ENCODE measurements at regions of chr1 and their contacts with region 1.

Region 1: GRCh38 chr1:67853704-67854103 is 20.4 kb upstream of the GNG12 start:
- DNase-seq: peak; percentile 83
- H3K4me3 Mint-ChIP-seq: no peak overlapping the region
- H3K27ac Mint-ChIP-seq: no peak overlapping the region
- H3K4me1 Mint-ChIP-seq: peaks cover 20% of the 10 kb centered on the region
- H3K27me3 Mint-ChIP-seq: no peaks in the 10 kb centered on the region
- CTCF ChIP-seq: peak; percentile 87

Region 2: DNA sequence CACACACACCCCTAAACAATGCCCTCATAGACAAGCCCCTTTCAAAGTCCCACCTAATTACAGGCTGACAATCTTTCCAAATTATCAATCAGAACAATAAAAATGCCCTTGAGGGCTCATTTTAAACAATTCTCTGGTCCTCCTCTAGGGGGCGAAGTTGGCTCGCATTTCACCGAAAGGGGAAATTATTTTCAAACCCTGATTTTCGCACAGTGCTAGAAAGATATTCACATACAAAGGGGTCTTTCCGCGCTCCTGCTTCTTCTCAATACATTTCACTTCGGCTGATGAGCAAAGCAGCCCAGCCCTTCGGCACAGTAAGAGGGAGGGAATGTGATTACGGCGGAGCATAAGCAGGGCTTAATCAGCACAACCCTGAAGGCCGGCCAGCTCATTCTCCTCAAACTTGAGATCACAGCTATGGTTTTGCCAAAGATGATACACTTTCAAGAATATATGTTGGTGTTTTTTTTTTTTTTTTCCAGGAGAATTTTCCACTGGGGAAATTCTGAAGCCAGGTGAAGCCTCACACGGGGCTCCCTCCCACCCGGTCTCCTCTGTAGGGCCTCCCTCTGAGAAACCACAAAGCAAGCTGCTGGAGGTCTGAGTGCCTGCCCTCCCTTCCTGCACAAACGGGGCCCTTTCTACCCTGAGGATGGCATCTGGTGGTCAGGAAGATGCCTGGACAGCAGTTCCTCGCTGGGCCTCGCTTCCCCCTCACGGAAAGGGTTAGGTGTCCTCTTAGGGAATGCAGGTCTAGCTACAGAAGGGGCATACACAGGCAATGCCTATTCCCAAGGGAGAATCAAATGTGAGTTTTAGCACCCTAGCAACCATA is 87.3 kb before region 1 on chr1:
- CTCF ChIA-PET with region 1: interaction called, 19 read pairs
- intact Hi-C with region 1: loop called (anchors 1 kb)
- DNase-seq: peak; percentile 60
- H3K4me3 Mint-ChIP-seq: no peak overlapping the region
- H3K27ac Mint-ChIP-seq: no peak overlapping the region
- H3K4me1 Mint-ChIP-seq: peaks cover 32% of the 10 kb centered on the region
- H3K27me3 Mint-ChIP-seq: no peaks in the 10 kb centered on the region
- CTCF ChIP-seq: peak; percentile 60

Region 3: DNA sequence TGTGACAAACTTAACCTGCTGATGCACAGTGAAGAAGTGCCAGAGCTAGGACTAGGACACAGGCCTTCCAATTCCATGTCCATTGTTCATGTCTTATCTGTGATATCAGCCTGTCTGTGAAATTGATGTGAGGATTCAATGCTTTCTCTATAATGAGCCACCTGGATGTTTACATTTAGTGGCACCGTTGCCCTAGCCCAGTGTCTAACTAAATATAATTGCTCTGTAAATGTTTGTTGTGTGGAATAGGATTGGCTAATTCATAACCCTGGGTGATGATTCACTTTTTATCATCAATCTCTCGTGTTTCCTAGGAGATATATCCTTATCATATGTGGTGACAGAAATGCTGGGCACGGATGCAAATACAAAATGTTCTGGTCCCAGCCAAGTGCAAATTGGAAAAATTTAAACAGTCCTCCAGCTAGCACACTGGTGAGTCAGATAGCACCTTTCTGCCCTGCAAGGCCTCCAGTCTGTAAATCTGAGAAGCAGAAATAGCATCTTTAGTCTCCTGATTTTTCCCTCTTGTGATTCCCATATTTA is 26.4 kb after region 1 on chr1:
- CTCF ChIA-PET with region 1: no interaction called
- intact Hi-C with region 1: no loop called
- DNase-seq: no peak
- H3K4me3 Mint-ChIP-seq: no peak overlapping the region
- H3K27ac Mint-ChIP-seq: peak overlapping the region; percentile 38
- H3K4me1 Mint-ChIP-seq: peaks cover 28% of the 10 kb centered on the region
- H3K27me3 Mint-ChIP-seq: no peaks in the 10 kb centered on the region
- CTCF ChIP-seq: no peak

Region 4: GRCh38 chr1:68010090-68010489 is 156.4 kb after region 1 on chr1:
- CTCF ChIA-PET with region 1: interaction called, 16 read pairs
- intact Hi-C with region 1: loop called (anchors 1 kb)
- DNase-seq: no peak
- H3K4me3 Mint-ChIP-seq: no peak overlapping the region
- H3K27ac Mint-ChIP-seq: no peak overlapping the region
- H3K4me1 Mint-ChIP-seq: no peaks in the 10 kb centered on the region
- H3K27me3 Mint-ChIP-seq: no peaks in the 10 kb centered on the region
- CTCF ChIP-seq: no peak

Region 5: DNA sequence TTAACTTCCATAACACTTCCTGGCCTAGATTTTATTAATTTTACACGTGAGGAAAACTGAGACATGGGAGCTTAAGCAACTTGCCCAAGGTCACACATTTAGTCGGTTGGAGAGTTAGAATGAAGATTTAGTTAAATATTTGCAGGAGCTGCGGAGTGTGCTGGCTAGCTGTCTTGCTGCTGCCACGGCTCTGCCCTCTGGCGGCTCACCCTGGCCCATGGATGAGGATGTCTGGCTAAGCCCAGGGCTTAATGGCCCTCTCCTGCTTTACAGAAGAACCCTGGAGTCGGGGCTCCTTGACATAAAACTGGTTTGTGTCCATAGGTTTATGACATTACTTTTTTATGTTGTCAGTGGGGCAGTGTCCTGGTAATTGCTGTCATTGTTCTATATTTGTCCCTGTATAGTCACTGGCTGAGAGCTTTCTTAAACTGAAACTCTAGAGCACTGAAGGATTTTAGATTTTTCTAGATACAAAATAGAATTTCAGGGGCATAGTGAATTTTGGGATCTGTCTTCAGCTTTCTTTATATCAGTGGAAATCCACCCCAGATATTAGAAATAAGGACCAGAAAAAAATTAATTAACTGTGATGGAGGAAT is 467.5 kb after region 1 on chr1:
- CTCF ChIA-PET with region 1: interaction called, 5 read pairs
- intact Hi-C with region 1: loop called (anchors 5 kb)
- DNase-seq: peak; percentile 84
- H3K4me3 Mint-ChIP-seq: no peak overlapping the region
- H3K27ac Mint-ChIP-seq: no peak overlapping the region
- H3K4me1 Mint-ChIP-seq: peaks cover 5% of the 10 kb centered on the region
- H3K27me3 Mint-ChIP-seq: no peaks in the 10 kb centered on the region
- CTCF ChIP-seq: peak; percentile 74

Measured in Calu3 (cell line).